ENCODE measurements at regions of chr5 and their contacts with region 1.

Region 1: DNA sequence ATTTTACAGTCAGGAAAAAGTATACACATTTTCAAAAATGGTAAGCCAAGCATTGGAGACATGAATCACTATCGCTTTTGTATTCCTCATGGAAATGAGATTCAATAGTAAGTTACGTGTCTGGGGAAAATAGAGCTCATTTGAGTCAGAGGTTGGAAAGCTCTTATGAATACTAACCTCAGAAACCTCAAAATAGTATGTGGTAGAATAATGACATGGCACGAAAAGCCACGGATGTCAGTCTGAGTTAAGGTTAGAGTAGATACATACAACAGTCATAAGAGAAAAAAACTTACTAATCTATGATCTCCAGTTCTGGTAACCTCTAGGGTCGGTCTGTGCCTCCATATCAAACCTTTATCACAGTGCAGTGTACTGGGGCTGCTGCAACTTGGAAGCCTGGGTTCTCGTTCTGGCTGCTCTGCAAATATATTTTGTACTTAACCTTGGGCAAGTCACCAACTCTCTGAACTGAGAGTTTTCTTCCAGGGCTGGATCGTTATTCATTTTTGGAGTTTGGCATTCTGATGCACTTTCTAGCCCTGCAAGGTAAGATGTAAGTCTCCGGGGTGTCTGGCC is 31.8 kb downstream of the MAP1B start:
- DNase-seq: no peak
- H3K4me3 ChIP-seq: peak overlapping the region; percentile 35 to 43
- H3K27ac ChIP-seq: peak overlapping the region; percentile 93 to 95
- H3K4me1 ChIP-seq: peaks cover 26 to 89% of the 10 kb centered on the region in 2 donors
- H3K27me3 ChIP-seq: no peaks in the 10 kb centered on the region
- CTCF ChIP-seq: no peak

Region 2: GRCh38 chr5:72179028-72179815 is 40.2 kb after region 1 on chr5:
- intact Hi-C with region 1: loop called (anchors 2 kb)
- DNase-seq: peak in 1 of 2 donors; percentile 95
- H3K4me3 ChIP-seq: peak overlapping the region; percentile 48 to 61
- H3K27ac ChIP-seq: peak overlapping the region; percentile 88 to 95
- H3K4me1 ChIP-seq: peaks cover 8 to 69% of the 10 kb centered on the region in 2 donors
- H3K27me3 ChIP-seq: no peaks in the 10 kb centered on the region
- CTCF ChIP-seq: no peak

Region 3: GRCh38 chr5:72280581-72281170 is 141.6 kb after region 1 on chr5:
- intact Hi-C with region 1: no loop called
- DNase-seq: no peak
- H3K4me3 ChIP-seq: no peak overlapping the region
- H3K27ac ChIP-seq: peak overlapping the region; percentile 56 to 65
- H3K4me1 ChIP-seq: peaks cover 0 to 27% of the 10 kb centered on the region in 2 donors
- H3K27me3 ChIP-seq: no peaks in the 10 kb centered on the region
- CTCF ChIP-seq: peak; percentile 17 to 55 (median 40)

Region 4: GRCh38 chr5:72441861-72442540 is 303.0 kb after region 1 on chr5:
- intact Hi-C with region 1: loop called (anchors 10 kb)
- DNase-seq: peak in 1 of 2 donors; percentile 82
- H3K4me3 ChIP-seq: no peak overlapping the region
- H3K27ac ChIP-seq: peak overlapping the region; percentile 90 to 93
- H3K4me1 ChIP-seq: peaks cover 4 to 43% of the 10 kb centered on the region in 2 donors
- H3K27me3 ChIP-seq: no peaks in the 10 kb centered on the region
- CTCF ChIP-seq: no peak

Measured in ascending aorta (tissue), 2 donors.